Heart right ventricle (tissue), 16 donors: ENCODE measurements at regions of chr22 and their contacts with region 1.

Region 1: GRCh38 chr22:17501679-17502285 is 61.5 kb upstream of the SLC25A18 start:
- DNase-seq: peak in 1 of 2 donors; percentile 50
- ATAC-seq: peak; percentile 78 to 93 (median 89)
- H3K4me3 ChIP-seq: no peak overlapping the region
- H3K27ac ChIP-seq: no peak overlapping the region
- H3K4me1 ChIP-seq: peaks cover 0 to 7% (median 0%) of the 10 kb centered on the region in 9 donors
- H3K27me3 ChIP-seq: no peaks in the 10 kb centered on the region
- CTCF ChIP-seq: peak; percentile 42 to 83 (median 68)

Region 2: DNA sequence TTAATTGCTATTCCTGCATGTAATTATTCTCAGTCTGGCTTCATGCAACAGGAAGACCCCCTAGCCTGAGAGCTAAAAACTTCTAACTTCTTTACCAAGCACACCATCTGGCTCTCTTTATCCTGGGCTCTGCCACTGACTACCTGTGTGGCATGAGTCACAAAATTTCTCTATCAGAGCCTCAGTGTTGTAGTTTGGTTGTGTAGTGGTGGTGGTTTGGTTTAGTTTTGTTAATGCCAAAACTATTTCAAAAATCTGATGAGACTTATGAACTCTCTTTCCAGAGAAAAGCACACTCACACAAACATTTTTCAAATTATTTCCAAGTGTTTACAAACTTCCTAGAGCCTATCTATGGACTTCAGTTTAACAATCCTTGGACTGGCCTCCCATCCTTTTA is 424.5 kb before region 1 on chr22:
- intact Hi-C with region 1: loop called (anchors 2 to 10 kb)
- DNase-seq: no peak
- ATAC-seq: no peak
- H3K4me3 ChIP-seq: no peak overlapping the region
- H3K27ac ChIP-seq: no peak overlapping the region
- H3K4me1 ChIP-seq: peaks cover 0 to 18% (median 0%) of the 10 kb centered on the region in 9 donors
- H3K27me3 ChIP-seq: peaks cover 0 to 3% (median 0%) of the 10 kb centered on the region in 7 donors
- CTCF ChIP-seq: no peak

Region 3: GRCh38 chr22:17199003-17199731 is 302.6 kb before region 1 on chr22:
- intact Hi-C with region 1: loop called in 4 of 10 experiments (anchors 10 kb)
- DNase-seq: peak in 1 of 2 donors; percentile 80
- ATAC-seq: peak; percentile 70 to 87 (median 78)
- H3K4me3 ChIP-seq: peak overlapping the region; percentile 24 to 63 (median 50)
- H3K27ac ChIP-seq: peak overlapping the region; percentile 77 to 97 (median 88)
- H3K4me1 ChIP-seq: peaks cover 0 to 25% (median 15%) of the 10 kb centered on the region in 9 donors
- H3K27me3 ChIP-seq: peaks cover 0 to 5% (median 0%) of the 10 kb centered on the region in 7 donors
- CTCF ChIP-seq: no peak

Region 4: GRCh38 chr22:17264321-17265052 is 237.3 kb before region 1 on chr22:
- intact Hi-C with region 1: loop called in 1 of 10 experiments (anchors 5 kb)
- DNase-seq: peak in 1 of 2 donors; percentile 57
- ATAC-seq: peak; percentile 69 to 86 (median 82)
- H3K4me3 ChIP-seq: peak overlapping the region in 5 of 10 donors; percentile 9 to 29 (median 14)
- H3K27ac ChIP-seq: peak overlapping the region in 9 of 10 donors; percentile 56 to 90 (median 76)
- H3K4me1 ChIP-seq: peaks cover 0 to 38% (median 9%) of the 10 kb centered on the region in 9 donors
- H3K27me3 ChIP-seq: peaks cover 0 to 7% (median 4%) of the 10 kb centered on the region in 7 donors
- CTCF ChIP-seq: no peak

Region 5: DNA sequence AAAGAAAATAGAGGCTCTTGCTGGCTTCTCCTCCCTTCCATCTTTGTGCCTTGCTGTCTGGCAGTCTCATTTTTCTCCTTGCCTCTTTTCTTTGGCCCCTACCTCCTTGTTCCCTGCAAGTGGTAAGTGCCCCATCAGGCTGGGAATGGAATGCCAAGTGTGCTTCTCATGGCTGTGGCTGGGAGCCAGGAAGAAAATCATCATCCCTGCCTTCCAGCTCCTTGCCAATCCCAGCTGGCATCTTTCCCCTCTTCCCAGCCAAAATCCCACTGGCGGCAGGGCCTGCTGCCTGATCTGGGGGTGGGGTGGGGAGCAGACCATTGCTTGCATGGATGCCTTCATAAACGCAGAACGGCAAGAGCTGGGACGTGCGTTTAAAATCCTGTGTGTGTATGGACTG is 34.5 kb after region 1 on chr22:
- intact Hi-C with region 1: no loop called
- DNase-seq: no peak
- ATAC-seq: peak in 1 of 8 donors; percentile 48
- H3K4me3 ChIP-seq: no peak overlapping the region
- H3K27ac ChIP-seq: no peak overlapping the region
- H3K4me1 ChIP-seq: no peaks in the 10 kb centered on the region
- H3K27me3 ChIP-seq: no peaks in the 10 kb centered on the region
- CTCF ChIP-seq: no peak

Region 6: DNA sequence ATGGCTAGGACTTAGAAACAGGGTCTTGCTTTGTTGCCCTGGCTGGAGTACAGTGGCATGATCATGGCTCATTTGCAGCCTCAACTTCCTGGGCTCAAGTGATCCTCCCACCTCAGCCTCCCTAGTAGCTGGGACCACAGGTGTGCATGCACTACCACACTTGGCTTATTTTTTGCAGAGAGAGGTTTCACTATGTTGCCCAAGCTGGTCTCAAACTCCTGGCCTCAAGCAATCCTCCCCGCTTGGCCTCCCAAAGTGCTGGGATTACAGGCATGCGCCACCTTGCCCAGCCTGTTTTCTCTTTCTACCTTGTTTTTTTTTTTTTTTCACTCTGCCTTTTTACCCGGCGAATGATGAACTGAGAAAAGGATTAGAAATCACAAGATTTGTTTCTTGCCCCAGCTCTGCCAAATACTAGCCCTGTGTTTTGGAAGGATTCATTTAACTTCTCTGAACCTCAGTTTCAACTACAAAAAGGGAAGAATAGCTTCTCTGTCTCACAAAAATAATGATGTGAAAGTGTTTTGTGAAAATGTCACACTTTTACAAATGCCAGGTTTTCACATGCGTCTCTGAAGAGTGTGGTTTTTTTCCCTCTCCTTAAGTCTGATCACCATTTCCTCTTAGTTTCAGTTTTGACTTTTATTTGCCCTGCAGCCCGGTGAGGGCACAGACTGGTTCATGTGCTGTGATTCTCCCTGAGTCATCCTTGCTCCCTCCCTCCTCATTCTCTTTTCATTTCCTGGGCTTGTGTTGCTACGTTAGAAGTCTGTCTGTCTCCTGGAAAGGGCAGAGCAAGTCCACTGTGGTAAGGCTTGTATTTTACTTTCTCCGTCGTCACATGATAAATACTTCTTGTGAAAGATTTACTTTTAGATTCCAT is 204.5 kb after region 1 on chr22:
- intact Hi-C with region 1: no loop called
- DNase-seq: peak in 1 of 2 donors; percentile 35
- ATAC-seq: peak; percentile 69 to 98 (median 88)
- H3K4me3 ChIP-seq: peak overlapping the region in 8 of 10 donors; percentile 1 to 40 (median 28)
- H3K27ac ChIP-seq: peak overlapping the region; percentile 0 to 78 (median 62)
- H3K4me1 ChIP-seq: peaks cover 0 to 26% (median 0%) of the 10 kb centered on the region in 9 donors
- H3K27me3 ChIP-seq: no peaks in the 10 kb centered on the region
- CTCF ChIP-seq: no peak